ENCODE measurements at regions of chr1 and their contacts with region 1.

Region 1: GRCh38 chr1:153990468-153991150 is at the start of gene RPS27:
- DNase-seq: peak; percentile 86 to 93
- ATAC-seq: peak; percentile 82 to 85 (median 84)
- H3K4me3 ChIP-seq: peak within 1 kb of the TSS; percentile 93
- H3K27ac ChIP-seq: peak within 1 kb of the TSS; percentile 98
- H3K4me1 ChIP-seq: peaks cover 25% of the 10 kb centered on the region
- H3K27me3 ChIP-seq: no peaks in the 10 kb centered on the region
- CTCF ChIP-seq: no peak
- total RNA-seq, gene RPS27: 653 to 1,325 (median 1,012) TPM

Region 2: GRCh38 chr1:153670859-153671627 is 319.6 kb before region 1 on chr1 and contains the start of gene ILF2:
- intact Hi-C with region 1: loop called (anchors 2 to 10 kb)
- DNase-seq: peak; percentile 96 to 99
- ATAC-seq: peak; percentile 92 to 96 (median 94)
- H3K4me3 ChIP-seq: peak within 1 kb of the TSS; percentile 89
- H3K27ac ChIP-seq: peak within 1 kb of the TSS; percentile 88
- H3K4me1 ChIP-seq: peaks cover 13% of the 10 kb centered on the region
- H3K27me3 ChIP-seq: no peaks in the 10 kb centered on the region
- CTCF ChIP-seq: peak; percentile 12
- total RNA-seq, gene ILF2: 71.7 to 102 (median 98.2) TPM

Region 3: DNA sequence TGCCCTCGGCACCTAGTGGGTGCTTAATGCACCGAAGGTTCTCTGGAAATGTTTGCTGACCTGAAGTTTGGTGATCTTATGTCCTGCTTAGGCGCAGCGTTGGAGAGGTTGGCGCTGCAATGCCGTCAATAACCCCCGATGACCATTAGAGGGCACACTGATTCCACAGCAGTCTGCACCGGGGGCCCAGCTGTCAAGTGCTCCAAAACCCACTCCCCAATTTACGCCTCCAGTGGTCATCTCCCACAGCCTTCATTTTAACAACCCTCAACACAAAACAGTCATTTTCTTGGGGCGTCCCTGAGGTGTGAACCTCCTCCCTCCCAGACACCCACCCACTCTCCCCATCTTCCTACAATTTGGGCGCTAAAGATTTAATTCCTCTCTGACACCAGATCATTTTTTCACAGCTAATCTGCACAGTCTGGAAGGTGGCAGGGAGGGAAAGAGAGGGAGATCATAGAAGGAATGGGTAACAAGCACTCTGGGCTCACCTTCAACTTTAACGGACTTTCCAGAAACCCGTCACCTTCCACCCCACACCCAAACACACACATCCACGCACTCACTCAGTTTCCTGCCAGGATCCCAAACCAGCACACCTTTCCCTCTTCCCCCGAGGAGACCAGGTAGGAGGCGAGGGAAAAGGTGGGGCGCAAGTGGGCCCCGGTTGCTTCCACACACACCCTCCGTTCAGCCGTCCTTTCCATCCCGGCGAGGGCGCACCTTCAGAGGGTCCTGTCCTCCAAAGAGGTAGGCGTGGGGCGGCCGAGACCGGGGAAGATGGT is 312.7 kb before region 1 on chr1:
- intact Hi-C with region 1: loop called (anchors 2 to 10 kb)
- DNase-seq: peak; percentile 49 to 70
- ATAC-seq: peak; percentile 63 to 86 (median 70)
- H3K4me3 ChIP-seq: peak overlapping the region; percentile 70
- H3K27ac ChIP-seq: no peak overlapping the region
- H3K4me1 ChIP-seq: no peaks in the 10 kb centered on the region
- H3K27me3 ChIP-seq: peaks cover 0 to 30% (median 9%) of the 10 kb centered on the region in 3 donors
- CTCF ChIP-seq: peak; percentile 86

Region 4: DNA sequence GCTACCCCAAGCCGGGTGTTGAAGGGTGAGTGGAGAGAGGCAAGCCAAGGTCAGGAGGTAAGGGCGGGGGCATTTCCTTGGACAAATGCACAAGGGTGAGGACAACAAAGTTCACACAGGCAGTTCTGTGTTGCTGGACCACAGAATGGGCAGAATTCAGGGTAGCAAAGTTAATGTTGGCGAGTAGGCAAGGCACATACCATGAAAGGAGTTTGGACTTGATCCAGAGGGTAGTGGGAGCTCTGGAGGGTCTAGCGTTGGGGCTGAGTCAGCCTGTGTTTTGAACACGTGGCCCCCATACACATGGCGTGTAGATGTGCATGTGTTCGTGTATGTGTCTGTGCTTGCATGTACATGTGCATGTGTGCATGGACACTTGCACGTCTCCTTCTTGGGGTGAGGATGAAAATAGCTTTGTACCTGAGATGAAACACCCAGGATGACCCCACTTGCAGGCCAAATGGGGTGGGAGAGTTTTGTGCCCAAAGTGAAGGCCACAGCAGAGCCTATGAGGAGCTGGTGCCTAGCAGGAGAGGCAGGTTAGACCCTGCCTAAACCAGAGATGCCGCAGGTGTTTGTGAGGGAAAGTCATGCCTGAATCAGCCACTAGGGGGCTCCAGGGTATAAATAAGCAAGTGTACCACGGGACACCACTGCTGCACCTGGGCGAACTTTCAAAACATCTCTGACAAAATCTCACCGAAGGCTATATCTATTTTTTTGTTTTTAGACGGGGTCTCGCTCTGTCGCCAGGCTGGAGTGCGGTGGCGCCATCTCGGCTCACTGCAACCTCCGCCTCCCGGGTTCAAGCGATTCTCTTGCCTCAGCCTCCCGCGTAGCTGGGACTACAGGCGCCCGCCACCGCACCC is 193.6 kb before region 1 on chr1:
- intact Hi-C with region 1: loop called (anchors 2 kb)
- DNase-seq: peak; percentile 73 to 80
- ATAC-seq: peak; percentile 74 to 85 (median 82)
- H3K4me3 ChIP-seq: no peak overlapping the region
- H3K27ac ChIP-seq: no peak overlapping the region
- H3K4me1 ChIP-seq: no peaks in the 10 kb centered on the region
- H3K27me3 ChIP-seq: no peaks in the 10 kb centered on the region
- CTCF ChIP-seq: peak; percentile 90

Region 5: DNA sequence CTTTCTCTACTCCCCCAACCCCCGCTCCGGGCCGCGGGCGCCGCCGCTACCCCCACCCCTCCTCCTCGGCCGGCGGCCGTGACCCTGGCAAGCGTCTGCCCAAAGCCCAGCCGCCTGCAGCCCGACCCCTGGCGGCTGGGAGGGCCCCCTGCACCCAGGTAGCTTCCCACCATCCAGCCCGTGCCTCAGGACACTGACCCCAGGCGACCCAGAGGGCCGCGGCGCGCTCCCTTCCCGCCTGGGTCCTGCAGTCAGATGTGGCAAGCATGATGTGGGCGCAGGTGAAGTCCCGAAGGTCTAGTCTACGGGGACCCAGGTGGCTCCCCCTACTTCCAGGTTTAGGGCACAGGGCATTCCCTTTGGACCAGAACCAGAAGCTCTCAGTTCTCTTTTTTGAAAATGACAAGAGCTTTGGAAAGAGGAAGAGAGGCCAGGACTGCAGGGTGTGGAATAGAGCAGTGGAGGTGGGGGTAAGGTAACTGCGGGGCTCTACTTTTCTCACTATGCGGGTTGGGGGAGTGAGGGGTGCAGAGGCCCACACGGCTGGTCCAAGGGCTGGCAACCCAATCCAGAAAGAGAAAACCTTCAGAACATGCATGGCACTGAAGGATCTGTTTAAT is 43.9 kb before region 1 on chr1 and contains the start of gene DENND4B:
- intact Hi-C with region 1: loop called in 1 of 2 experiments (anchors 5 kb)
- DNase-seq: peak; percentile 88 to 93
- ATAC-seq: peak; percentile 84 to 85 (median 84)
- H3K4me3 ChIP-seq: peak within 1 kb of the TSS; percentile 99
- H3K27ac ChIP-seq: peak within 1 kb of the TSS; percentile 94
- H3K4me1 ChIP-seq: peaks cover 24% of the 10 kb centered on the region
- H3K27me3 ChIP-seq: no peaks in the 10 kb centered on the region
- CTCF ChIP-seq: peak; percentile 93
- total RNA-seq, gene DENND4B: 47.1 to 75.4 (median 50.3) TPM

Region 6: DNA sequence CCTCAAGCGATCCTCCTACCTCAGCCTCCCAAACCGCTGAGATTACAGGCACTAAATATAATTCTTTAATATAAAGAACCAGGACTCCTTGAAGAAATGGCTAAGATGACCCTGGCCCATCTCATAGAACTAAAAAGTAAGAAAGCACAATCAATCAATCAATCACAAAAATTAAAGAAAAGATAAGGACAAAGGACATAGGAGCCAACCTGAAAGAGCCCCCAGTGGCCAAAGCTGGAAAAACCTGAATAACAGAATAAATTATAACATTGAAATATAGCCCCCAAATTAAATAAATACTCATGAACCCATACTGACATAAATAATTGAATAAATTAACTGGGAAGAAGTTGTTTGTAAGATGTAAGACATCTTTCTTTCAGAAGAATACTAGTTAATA is 155.4 kb after region 1 on chr1:
- intact Hi-C with region 1: no loop called
- DNase-seq: no peak
- ATAC-seq: no peak
- H3K4me3 ChIP-seq: no peak overlapping the region
- H3K27ac ChIP-seq: no peak overlapping the region
- H3K4me1 ChIP-seq: peaks cover 6% of the 10 kb centered on the region
- H3K27me3 ChIP-seq: no peaks in the 10 kb centered on the region
- CTCF ChIP-seq: peak; percentile 26

Region 7: GRCh38 chr1:154272217-154272998 is 281.8 kb after region 1 on chr1 and contains the start of gene HAX1:
- intact Hi-C with region 1: loop called in 1 of 2 experiments (anchors 10 kb)
- DNase-seq: peak; percentile 92 to 95
- ATAC-seq: peak; percentile 91 to 94 (median 92)
- H3K4me3 ChIP-seq: peak within 1 kb of the TSS; percentile 80
- H3K27ac ChIP-seq: peak within 1 kb of the TSS; percentile 86
- H3K4me1 ChIP-seq: peaks cover 13% of the 10 kb centered on the region
- H3K27me3 ChIP-seq: no peaks in the 10 kb centered on the region
- CTCF ChIP-seq: peak; percentile 83
- total RNA-seq, gene HAX1: 122 to 148 (median 136) TPM